Mammary epithelial cell (primary cell): ENCODE measurements at regions of chr20 and their contacts with region 1.

Region 1: DNA sequence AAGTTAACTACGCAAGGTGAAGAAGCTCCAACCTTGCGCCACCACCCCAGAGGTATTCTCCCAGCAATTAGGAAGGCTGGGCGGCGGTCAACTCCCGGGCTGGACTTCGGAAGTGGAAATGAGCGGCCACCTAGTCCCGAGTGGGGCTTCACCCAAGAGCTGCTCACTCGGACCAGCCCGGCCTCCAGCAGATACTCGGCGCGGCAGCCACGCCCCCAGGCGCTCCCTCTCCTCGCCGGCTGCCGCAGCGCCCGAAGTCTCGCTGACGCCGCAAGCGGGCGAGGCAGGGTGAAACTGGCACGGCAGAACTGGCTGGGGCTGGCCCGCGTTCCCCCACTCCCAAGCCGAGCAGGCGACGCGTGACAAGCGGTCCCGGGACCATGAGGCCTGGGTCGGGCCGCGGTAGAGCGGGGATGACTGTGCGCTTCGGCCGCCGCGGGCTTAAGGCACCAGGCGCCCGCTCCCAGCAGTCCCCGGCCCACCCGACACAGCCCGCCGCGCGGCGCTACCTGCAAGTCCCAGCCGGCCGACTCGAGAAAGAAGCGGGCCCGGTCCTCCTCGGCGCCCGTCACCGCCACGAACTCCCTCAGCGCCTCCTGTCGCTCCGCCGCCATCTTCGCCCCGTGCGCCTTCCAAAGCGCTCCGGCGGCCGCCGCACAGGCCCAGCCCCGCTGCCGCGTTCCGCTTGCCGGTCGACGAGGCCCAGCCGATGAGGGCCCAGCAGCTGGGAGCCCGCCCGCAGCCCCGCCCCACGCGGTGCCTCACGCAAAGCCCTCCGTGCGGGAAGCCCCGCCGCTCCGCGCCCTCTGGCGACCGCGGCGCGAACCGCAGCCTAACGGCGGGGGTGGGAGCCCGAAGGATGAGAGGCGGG is at the start of gene NSFL1C:
- DNase-seq: peak; percentile 93
- H3K4me3 ChIP-seq: peak within 1 kb of the TSS; percentile 83 to 95 (median 83)
- H3K27ac ChIP-seq: peak within 1 kb of the TSS; percentile 94
- H3K4me1 ChIP-seq: peaks cover 39% of the 10 kb centered on the region
- H3K27me3 ChIP-seq: no peaks in the 10 kb centered on the region
- CTCF ChIP-seq: peak; percentile 70 to 92
- total RNA-seq, gene NSFL1C: 46.3 to 105 TPM

Region 2: DNA sequence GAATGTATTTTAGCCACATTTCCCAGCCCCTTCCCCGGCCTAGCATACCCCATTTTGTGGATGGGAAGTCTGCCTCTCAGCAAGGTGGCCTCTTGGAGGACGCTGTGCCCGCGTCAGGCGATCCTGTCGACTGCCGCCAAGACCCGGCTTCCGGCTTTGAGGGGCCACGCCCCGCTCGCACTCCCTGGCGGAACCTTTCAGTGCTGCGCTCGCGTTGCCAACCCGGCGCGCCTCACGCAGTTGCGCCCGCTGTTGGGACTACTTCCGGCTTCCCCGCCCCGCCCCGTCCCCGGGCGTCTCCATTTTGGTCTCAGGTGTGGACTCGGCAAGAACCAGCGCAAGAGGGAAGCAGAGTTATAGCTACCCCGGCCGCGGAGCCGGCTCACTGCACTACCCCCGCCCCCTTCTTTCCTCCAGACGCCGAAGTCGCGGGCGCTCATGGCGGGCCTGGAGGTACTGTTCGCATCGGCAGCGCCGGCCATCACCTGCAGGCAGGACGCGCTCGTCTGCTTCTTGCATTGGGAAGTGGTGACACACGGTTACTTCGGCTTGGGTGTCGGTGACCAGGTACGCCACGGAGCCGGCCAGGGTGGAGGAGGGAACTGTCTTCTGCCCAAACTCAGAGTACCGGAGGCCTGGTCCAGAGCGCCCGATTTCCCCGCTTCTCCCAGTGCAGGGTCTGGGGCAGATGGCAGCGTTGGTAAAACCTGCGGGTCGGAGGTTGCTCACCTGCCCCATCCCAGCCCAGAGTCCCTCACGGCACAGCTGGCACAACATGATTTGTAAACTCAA is 347.9 kb before region 1 on chr20 and contains the start of gene PSMF1:
- CTCF ChIA-PET with region 1: no interaction called
- dilution Hi-C with region 1: no loop called
- in situ Hi-C with region 1: no loop called
- intact Hi-C with region 1: loop called (anchors 5 kb)
- DNase-seq: peak; percentile 89
- H3K4me3 ChIP-seq: peak within 1 kb of the TSS; percentile 73 to 96 (median 90)
- H3K27ac ChIP-seq: peak within 1 kb of the TSS; percentile 64
- H3K4me1 ChIP-seq: peaks cover 46% of the 10 kb centered on the region
- H3K27me3 ChIP-seq: no peaks in the 10 kb centered on the region
- CTCF ChIP-seq: no peak
- total RNA-seq, gene PSMF1: 77.5 to 198 TPM

Region 3: DNA sequence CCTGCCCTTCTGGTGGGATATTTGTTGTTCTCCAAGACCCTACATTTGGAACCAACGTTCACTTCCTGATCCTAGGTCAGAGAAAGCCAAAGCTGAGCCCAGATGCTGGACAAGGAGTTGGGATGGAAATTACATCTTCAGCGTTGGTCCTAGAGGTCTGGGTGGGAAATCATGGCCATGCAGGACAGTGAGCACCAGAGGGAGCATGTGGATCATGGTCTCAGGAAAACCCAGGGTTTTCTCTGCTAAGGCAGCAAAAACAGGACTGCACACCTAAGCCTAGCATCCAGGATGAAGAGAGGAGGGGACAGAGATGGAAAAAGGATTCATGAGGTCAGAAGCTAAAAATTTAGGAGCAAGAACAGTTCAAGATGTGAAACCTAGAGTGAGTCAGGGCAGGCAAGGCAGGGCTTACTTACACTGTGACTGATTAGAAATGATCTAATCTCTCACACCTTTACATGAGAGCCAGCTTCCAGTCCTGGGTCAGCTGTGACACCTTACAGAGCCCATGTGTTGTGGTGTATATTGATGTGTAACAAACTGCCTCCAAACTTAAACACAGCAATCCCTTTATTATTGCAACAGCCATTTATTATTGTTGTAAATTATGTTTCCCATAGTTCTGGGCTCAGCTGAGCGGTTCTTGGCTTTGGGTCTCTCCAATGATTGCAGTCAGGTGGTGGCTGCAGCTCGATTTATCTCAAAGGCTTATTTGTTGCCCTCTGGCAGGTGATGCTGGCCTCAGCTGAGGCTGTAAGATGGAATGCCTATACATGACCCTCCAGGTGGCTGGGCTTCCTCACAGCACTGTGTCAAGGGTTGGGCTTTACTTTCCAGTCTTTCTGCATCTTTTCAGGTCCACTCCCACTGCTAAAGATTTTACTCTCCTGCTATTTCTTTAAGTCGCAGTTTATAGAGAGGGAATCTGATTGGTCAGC is 256.7 kb before region 1 on chr20:
- CTCF ChIA-PET with region 1: no interaction called
- dilution Hi-C with region 1: no loop called
- in situ Hi-C with region 1: no loop called
- intact Hi-C with region 1: no loop called
- DNase-seq: no peak
- H3K4me3 ChIP-seq: no peak overlapping the region
- H3K27ac ChIP-seq: no peak overlapping the region
- H3K4me1 ChIP-seq: no peaks in the 10 kb centered on the region
- H3K27me3 ChIP-seq: peaks cover 1% of the 10 kb centered on the region
- CTCF ChIP-seq: peak in 1 of 2 donors; percentile 34

Region 4: DNA sequence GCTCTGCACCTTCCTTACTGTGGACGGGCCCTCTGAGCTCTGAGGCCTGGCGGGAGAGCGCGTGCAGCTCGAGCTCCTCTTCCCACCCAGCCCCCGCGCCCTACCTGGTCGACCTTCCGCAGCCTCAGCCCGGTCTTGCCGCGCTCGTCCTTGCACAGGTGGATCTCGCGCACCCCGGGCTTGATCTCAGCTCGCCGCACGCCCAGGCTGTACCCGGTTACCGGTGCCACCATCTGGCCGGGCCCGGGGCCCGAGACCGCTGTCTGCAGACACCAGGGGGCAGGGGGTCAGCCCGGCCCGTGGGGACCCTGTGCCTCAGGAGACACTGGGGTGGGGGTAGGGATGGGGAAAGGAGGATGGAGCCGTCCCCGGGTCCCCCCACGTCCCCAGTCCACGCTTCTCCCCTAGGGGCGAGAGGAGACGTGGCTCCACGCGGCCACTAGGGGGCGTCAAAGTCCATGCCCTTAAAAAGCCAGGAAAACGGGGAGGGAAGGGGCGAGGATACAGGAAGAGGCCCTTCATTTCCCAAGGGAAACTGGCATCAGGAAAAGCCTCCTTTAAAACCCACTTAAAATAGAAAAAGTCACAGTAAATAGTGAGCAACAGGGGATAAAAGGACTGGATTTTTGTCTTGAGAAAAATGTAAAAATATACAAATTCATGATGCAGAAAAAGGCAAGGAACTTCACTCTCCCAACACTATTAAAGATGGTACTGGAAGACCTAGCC is 153.0 kb before region 1 on chr20:
- CTCF ChIA-PET with region 1: no interaction called
- dilution Hi-C with region 1: no loop called
- in situ Hi-C with region 1: no loop called
- intact Hi-C with region 1: loop called (anchors 1 kb)
- DNase-seq: peak; percentile 37
- H3K4me3 ChIP-seq: peak overlapping the region in 2 of 3 experiments; percentile 17 to 27
- H3K27ac ChIP-seq: no peak overlapping the region
- H3K4me1 ChIP-seq: peaks cover 2% of the 10 kb centered on the region
- H3K27me3 ChIP-seq: no peaks in the 10 kb centered on the region
- CTCF ChIP-seq: peak; percentile 83 to 95

Region 5: DNA sequence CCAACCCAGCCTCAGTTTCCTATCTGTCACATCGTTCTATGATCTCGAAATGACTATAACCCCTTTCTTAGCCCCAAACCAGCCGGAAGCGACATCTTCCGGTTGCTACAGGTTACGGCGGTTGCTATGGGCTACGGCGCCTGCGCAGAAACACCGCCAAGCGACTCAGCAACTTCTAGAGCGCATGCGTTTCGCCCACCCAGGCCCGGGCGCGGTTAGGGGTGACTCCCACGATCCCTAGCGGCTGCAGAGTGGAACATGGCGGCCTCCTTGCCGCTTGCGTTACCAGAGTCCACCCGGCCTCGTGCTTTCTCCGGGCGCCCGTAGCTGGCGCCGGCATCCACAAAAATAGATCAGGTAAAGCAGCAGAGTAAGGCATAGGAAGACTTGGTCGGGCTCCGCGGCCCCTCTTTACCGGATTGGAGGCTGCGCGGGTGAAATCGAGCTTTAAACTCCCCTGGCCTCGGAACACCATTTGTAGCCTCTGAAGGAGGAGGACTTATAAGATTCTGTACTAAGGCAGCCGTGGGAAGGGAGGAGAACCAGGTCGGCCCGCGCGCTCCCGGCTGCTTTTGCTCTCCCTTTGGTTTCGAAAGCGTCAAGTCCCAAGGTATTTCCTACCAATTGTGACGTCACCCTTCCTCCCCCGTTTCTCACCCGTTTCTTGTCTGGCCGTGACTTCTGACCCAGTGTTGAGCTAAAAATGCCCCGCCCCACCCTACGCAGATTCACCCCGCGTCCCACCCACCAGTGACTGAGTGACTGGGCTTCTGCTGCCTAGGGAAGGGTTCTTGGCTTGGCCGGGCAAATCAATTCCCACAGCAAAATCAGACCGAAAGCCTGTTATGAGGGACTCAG is 141.0 kb before region 1 on chr20:
- CTCF ChIA-PET with region 1: no interaction called
- dilution Hi-C with region 1: no loop called
- in situ Hi-C with region 1: no loop called
- intact Hi-C with region 1: no loop called
- DNase-seq: peak; percentile 92
- H3K4me3 ChIP-seq: peak overlapping the region; percentile 62 to 91 (median 80)
- H3K27ac ChIP-seq: peak overlapping the region; percentile 99
- H3K4me1 ChIP-seq: peaks cover 53% of the 10 kb centered on the region
- H3K27me3 ChIP-seq: no peaks in the 10 kb centered on the region
- CTCF ChIP-seq: no peak

Region 6: DNA sequence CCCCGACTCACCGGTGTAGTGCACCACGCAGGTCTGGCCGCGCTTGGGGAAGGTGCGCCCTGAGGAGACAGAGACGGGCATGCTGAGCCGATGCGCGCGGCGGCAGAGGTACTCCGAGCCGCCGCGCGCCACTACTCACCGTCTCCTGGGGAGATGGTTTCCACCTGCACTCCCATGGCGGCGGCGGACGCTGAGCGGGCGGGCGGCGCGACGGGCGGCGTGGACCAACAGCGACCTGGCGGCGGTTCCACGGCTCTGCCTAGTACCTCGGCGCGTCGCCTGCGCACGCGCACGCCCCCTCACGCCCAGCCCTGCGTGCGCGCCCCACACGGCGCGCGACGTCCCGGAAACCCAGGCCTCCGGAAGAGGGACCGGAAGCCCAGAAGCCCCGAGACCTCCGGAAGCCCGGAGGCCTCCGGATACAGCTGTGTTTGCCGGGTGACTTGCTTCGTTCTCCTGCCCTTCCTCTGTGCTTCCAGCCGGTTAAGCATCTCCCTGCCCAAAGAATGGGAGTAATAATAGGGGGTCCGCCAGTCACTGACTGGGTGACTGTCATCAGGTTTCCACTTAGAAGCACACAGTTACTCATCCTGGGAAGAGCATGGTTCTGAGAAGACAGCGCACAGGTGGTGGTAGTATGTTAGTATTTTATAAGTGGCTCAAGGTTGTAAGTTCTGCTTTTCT is 73.5 kb before region 1 on chr20 and contains the start of gene FKBP1A:
- CTCF ChIA-PET with region 1: interaction called, 5 read pairs
- dilution Hi-C with region 1: no loop called
- in situ Hi-C with region 1: no loop called
- intact Hi-C with region 1: loop called (anchors 2 kb)
- DNase-seq: peak; percentile 92
- H3K4me3 ChIP-seq: peak within 1 kb of the TSS; percentile 57 to 84 (median 76)
- H3K27ac ChIP-seq: peak within 1 kb of the TSS; percentile 57
- H3K4me1 ChIP-seq: peaks cover 43% of the 10 kb centered on the region
- H3K27me3 ChIP-seq: no peaks in the 10 kb centered on the region
- CTCF ChIP-seq: no peak
- total RNA-seq, gene FKBP1A: 139 to 425 TPM